Common myeloid progenitor, CD34-positive (primary cell): ENCODE measurements at regions of chr11 and their contacts with region 1.

Region 1: DNA sequence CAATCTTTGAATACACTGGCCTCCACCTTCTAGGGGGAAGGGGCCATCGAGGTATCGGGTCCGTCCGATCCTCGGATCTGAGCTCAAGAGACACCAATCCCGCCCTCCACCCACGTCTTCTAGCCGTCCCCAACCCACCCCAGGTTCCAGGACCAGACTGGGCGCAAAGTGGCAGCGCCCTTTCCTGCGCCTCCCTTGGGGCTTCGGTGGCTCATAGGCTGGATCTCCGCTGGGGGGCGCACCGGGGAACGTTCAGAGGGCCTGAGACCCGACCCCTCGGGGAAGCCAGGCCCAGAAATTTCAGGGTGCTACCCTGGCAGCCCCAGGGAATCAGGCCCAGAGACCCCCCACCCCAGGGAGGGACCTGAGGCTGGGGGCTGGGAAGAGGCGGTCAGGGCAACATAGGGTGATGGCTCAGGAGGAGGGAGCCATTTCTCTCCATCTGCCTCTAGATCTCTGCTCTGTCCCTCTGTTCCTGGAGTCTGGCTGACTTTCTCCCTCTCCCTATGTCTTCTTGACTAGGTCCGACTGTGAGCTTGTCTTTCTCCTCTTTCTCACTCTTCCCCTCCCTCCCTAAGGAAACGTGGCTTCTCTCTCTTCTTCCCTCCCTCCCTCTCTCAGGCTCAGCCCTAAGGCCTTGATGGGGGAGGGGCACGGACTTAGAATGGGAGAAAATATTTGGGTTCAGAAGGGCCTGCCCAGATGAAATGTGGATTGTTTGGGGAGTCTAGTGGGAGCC is 1.1 kb downstream of the CREB3L1 start:
- DNase-seq: peak; percentile 35 to 60 (median 57)
- H3K4me3 ChIP-seq: peak overlapping the region in 6 of 7 experiments; percentile 25 to 70 (median 56)
- H3K27ac ChIP-seq: peak overlapping the region in 1 of 2 experiments; percentile 43
- H3K4me1 ChIP-seq: peaks cover 0 to 27% (median 22%) of the 10 kb centered on the region in 4 experiments
- H3K27me3 ChIP-seq: peaks cover 2 to 42% (median 12%) of the 10 kb centered on the region in 5 experiments

Region 2: DNA sequence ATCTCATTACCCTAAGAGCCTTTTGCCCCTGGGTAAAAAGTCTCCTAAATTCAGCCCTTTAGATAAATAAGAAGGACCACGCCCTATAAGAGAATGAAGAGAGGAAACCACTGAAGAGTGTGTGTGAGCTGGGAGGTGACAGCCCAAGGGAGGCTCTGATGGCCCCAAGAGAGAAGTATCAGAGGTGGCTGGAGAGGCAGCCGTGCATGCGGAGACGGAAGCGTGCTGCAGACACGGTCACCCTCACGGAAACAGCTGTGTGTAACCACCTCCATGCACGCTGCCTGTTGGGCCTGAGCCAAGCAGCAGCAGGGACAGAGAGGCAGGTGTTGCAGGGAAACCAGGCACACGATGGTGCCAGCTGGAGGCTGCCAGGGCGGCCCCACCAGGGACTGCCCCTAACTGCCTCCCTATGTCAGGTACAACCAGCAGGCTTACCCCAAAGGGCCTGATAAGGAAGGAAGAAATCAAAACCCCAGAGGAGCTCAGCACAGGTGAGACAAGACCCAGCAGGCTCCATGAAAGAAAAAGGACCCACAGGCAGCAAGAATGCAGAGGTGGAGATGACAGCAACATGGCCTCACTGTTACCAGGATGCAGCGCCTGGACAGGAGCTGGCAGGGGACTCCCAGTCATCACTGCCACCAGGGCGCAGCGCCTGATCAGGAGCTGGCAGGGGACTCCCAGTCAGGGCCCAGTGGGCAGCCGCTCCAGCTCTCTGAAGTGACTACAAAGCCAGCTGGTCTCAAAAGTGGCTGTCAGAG is 348.3 kb before region 1 on chr11:
- CTCF ChIA-PET with region 1: no interaction called
- POLR2A ChIA-PET with region 1: no interaction called
- DNase-seq: peak; percentile 41 to 85 (median 72)
- H3K4me3 ChIP-seq: no peak overlapping the region
- H3K27ac ChIP-seq: no peak overlapping the region
- H3K4me1 ChIP-seq: peaks cover 0 to 14% (median 10%) of the 10 kb centered on the region in 4 experiments
- H3K27me3 ChIP-seq: no peaks in the 10 kb centered on the region

Region 3: GRCh38 chr11:46295312-46296058 is 16.9 kb after region 1 on chr11:
- CTCF ChIA-PET with region 1: interaction called, 26 read pairs
- POLR2A ChIA-PET with region 1: no interaction called
- DNase-seq: peak; percentile 51 to 79 (median 77)
- H3K4me3 ChIP-seq: peak overlapping the region; percentile 25 to 77 (median 61)
- H3K27ac ChIP-seq: no peak overlapping the region
- H3K4me1 ChIP-seq: peaks cover 1 to 21% (median 16%) of the 10 kb centered on the region in 4 experiments
- H3K27me3 ChIP-seq: peaks cover 0 to 21% (median 12%) of the 10 kb centered on the region in 5 experiments

Region 4: GRCh38 chr11:46346886-46347636 is 68.5 kb after region 1 on chr11 and contains the start of gene DGKZ:
- CTCF ChIA-PET with region 1: no interaction called
- POLR2A ChIA-PET with region 1: no interaction called
- DNase-seq: peak; percentile 83 to 91 (median 91)
- H3K4me3 ChIP-seq: peak within 1 kb of the TSS; percentile 67 to 97 (median 84)
- H3K27ac ChIP-seq: peak within 1 kb of the TSS; percentile 54 to 79
- H3K4me1 ChIP-seq: peaks cover 20 to 88% (median 84%) of the 10 kb centered on the region in 4 experiments
- H3K27me3 ChIP-seq: no peaks in the 10 kb centered on the region